ENCODE measurements at regions of chr6 and their contacts with region 1.

Region 1: DNA sequence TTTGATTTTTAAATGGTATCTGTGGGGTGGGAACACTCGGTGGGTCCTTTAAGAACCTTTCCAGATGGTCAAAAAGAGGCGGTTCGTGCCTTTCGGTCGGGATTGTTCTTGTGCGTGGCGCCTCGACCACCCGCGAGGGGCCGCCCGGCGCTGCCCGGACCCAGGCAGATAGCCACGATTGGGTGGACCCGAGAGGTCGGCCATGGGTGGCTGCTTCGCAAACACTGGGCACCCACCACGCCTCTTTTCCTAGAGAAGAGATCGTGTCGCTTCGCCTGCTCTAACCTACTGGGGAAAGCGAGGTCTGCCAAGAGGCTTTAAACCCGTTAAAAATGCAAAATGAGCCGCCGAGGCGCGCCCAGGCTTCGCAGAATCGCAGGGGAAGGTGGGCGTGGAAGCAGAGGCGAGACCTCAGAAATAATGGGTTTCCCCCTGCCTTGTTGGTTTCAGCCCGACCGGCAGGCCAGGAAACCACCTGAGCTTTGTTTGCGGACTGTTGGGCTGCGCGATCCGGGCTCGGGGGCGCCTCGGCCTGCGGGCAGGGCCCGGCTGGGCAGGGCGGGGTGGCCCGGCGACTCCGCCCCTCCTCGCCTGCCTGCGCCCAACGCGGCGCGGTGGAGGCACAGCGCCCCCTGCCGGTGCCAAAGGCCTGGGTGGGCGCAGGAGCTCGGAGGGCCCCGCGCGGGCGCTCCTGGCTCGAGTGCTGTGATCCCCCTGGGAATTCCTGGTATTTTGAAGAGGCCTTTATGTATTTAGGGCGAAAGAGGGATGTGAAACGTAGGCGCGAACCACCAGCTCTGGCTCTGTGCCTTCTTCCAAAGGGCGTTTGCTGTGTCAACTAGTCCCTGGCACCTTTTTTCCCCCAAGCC is 1.6 kb downstream of the MARCKS start:
- DNase-seq: peak; percentile 89
- ATAC-seq: peak; percentile 86 to 92

Region 2: DNA sequence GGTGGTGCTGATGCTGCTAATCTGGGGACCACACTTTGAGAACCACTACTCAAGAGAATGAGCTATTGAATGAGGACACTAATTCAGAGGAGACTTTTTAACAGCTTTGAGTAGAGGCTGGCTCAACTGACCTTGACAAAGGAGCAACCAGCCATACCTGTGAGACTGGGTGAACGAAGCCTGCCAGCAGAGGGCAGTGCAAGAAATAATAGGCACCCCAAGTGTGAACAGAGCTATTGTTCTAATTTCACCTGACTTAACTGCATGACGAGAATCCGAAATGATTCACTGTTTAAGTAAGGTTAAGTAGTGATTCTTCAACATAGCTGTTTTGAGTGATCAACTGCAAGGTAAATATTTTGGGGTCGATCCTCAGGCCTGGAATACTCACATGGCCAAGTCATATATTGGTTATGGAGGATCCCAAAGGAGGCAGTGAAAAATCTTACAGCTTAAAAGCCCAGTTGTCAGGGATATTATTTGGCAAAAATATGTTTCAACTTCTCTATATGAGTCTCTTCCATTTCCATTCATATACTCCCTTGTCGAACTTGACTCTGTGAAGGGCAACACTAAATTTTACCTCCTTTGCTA is 552.1 kb before region 1 on chr6:
- intact Hi-C with region 1: loop called in 1 of 2 experiments (anchors 1 kb)
- DNase-seq: peak; percentile 69
- ATAC-seq: peak in 1 of 2 donors; percentile 39

Region 3: DNA sequence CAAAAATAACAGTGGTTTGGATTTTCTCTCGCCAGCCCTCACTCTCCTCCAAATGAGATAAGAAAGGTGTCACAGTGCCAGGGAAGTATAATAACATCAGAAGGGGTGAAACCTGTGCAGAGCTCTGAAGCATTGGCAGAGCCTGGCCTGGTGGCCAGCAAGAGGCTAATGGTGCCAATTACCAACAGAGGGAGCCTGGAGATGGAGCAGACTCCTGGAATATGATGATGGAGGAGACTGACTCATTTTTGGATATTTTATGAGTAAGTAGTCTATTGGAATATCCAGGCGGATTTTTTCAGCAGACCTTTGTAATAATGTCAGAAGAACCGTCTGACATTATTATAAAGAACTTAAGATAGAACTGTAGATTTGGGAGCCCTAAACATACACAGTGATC is 444.2 kb before region 1 on chr6:
- intact Hi-C with region 1: loop called (anchors 5 to 10 kb)
- DNase-seq: peak; percentile 35
- ATAC-seq: peak; percentile 84 to 96

Region 4: GRCh38 chr6:113564371-113565161 is 294.1 kb before region 1 on chr6:
- intact Hi-C with region 1: loop called in 1 of 2 experiments (anchors 2 kb)
- DNase-seq: peak; percentile 81
- ATAC-seq: peak; percentile 97 to 99

Region 5: GRCh38 chr6:113626475-113626874 is 232.2 kb before region 1 on chr6:
- intact Hi-C with region 1: loop called in 1 of 2 experiments (anchors 10 kb)
- DNase-seq: no peak
- ATAC-seq: no peak

Region 6: GRCh38 chr6:113969888-113970804 is 111.4 kb after region 1 on chr6:
- intact Hi-C with region 1: no loop called
- DNase-seq: peak; percentile 60
- ATAC-seq: peak; percentile 49 to 69

Measured in left cardiac atrium (tissue), 4 donors.